ENCODE measurements at regions of chr4 and their contacts with region 1.

Region 1: DNA sequence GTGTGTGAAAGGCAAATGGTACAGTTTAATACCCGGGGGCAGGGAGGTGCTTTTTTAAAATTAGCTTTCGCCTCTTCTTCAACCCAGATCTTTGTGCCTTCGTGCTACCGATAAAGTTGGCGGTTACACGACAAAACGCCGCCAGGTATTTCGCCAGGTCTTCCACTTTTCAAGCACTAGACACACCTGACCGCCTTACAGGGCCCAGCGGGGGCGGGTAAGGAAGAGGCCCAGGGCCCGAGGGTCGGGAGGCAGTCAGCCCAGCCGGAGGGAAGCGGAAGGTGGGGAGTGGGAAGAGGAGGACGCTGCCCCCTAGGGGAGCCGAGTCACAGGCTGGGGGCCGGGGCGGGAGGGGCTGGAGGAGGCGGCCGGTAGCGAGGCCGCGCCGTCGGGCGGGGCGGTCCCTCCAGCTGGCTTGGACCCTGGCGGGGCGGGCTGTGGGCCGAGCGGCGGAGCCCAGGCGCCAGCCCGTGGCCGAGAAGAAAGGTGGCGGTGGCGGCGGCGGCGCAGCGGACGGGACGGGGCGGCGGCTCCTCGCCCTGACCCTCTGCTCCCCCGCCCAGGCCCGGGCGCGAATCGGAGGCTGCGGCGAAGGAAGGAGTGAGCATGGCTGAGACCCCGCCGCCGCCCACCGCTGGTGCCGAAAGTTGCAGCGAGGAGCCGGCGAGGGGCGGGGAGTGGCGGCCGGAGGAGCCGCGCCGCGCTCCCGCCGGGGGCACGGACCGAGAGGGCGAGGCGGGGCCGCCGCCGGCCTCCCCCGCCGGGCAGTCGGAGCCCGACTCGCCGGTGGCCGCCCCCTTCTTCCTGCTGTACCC is 16.2 kb downstream of the UTP3 start:
- DNase-seq: peak; percentile 69
- ATAC-seq: peak; percentile 54
- H3K4me3 Mint-ChIP-seq: peak overlapping the region; percentile 85
- H3K27ac Mint-ChIP-seq: peak overlapping the region; percentile 92
- H3K4me1 Mint-ChIP-seq: peaks cover 22% of the 10 kb centered on the region
- H3K27me3 Mint-ChIP-seq: no peaks in the 10 kb centered on the region
- CTCF ChIP-seq: no peak

Region 2: GRCh38 chr4:70298051-70298450 is 406.5 kb before region 1 on chr4:
- CTCF ChIA-PET with region 1: no interaction called
- POLR2A ChIA-PET with region 1: no interaction called
- intact Hi-C with region 1: no loop called
- DNase-seq: no peak
- ATAC-seq: no peak
- H3K4me3 Mint-ChIP-seq: no peak overlapping the region
- H3K27ac Mint-ChIP-seq: no peak overlapping the region
- H3K4me1 Mint-ChIP-seq: no peaks in the 10 kb centered on the region
- H3K27me3 Mint-ChIP-seq: no peaks in the 10 kb centered on the region
- CTCF ChIP-seq: no peak

Region 3: DNA sequence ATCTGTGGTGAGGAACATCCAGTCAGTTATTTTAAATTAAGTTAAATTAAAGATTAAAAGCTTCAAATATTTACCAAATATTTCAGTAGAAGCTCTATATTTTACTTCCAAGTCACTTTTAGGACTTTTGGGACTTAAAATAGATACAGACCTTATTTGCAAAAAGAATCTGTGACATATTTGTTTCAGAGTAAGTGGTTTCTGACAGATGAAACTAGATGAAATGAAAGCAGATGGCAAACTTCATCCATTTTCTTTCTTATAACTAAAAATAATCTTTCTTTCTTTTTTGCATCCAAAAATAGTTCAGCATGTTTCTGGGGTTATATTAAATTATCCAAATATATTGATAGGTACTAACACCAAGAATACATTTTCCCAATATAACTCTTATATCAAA is 22.8 kb before region 1 on chr4:
- CTCF ChIA-PET with region 1: interaction called, 79 read pairs
- POLR2A ChIA-PET with region 1: no interaction called
- intact Hi-C with region 1: no loop called
- DNase-seq: no peak
- ATAC-seq: no peak
- H3K4me3 Mint-ChIP-seq: no peak overlapping the region
- H3K27ac Mint-ChIP-seq: no peak overlapping the region
- H3K4me1 Mint-ChIP-seq: peaks cover 20% of the 10 kb centered on the region
- H3K27me3 Mint-ChIP-seq: no peaks in the 10 kb centered on the region
- CTCF ChIP-seq: no peak

Region 4: GRCh38 chr4:70687821-70688794 is 16.4 kb before region 1 on chr4 and contains the start of gene UTP3:
- CTCF ChIA-PET with region 1: interaction called, 79 read pairs
- POLR2A ChIA-PET with region 1: interaction called, 40 read pairs
- intact Hi-C with region 1: loop called (anchors 2 kb)
- DNase-seq: peak; percentile 95
- ATAC-seq: peak; percentile 92
- H3K4me3 Mint-ChIP-seq: peak within 1 kb of the TSS; percentile 97
- H3K27ac Mint-ChIP-seq: peak within 1 kb of the TSS; percentile 94
- H3K4me1 Mint-ChIP-seq: peaks cover 29% of the 10 kb centered on the region
- H3K27me3 Mint-ChIP-seq: no peaks in the 10 kb centered on the region
- CTCF ChIP-seq: peak; percentile 97
- total RNA-seq, gene UTP3: 31.0 to 33.5 TPM